ENCODE measurements at regions of chr6 and their contacts with region 1.

Region 1: DNA sequence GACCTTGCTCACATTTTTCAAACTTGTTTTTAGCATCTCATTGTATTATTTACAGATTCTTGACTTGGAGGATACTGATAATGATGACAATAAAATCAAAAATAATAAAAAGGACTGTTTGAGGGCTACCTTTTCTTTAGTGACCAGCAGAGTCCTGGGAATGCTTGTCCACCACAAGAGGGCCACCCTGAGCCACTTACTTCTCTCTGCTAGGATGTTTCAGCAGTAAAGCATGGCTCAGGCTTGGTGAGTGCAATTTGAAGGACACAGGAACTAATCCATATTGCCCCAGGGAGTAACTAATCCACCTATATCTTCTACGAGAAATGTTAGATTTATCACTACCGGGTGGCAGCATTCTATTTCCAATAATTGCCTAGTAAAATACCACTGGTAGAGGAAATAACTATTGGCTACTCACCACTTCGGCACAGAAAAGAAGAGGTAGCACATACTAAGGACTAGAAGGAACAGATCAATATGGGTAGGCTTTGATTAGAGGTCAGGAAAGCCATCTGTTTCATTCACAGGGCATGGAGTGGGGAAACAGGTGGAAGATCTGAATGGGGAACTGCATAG is 5.8 kb upstream of the KIAA0408 start:
- DNase-seq: peak; percentile 39 to 64 (median 45)
- ATAC-seq: peak; percentile 98
- H3K4me3 ChIP-seq: no peak overlapping the region
- H3K27ac ChIP-seq: no peak overlapping the region
- H3K4me1 ChIP-seq: no peaks in the 10 kb centered on the region
- H3K27me3 ChIP-seq: peaks cover 0 to 2% of the 10 kb centered on the region in 2 experiments; a peak in 1 of 5 replicates
- CTCF ChIP-seq: peak; percentile 70 to 81 (median 79)
- EP300 ChIP-seq: no peak
- POLR2A ChIP-seq: no peak
- RAD21 ChIP-seq: peak; percentile 34 to 63

Region 2: GRCh38 chr6:127539272-127539671 is 74.3 kb after region 1 on chr6:
- CTCF ChIA-PET with region 1: interaction called, 4 read pairs
- POLR2A ChIA-PET with region 1: no interaction called
- in situ Hi-C with region 1: no loop called
- intact Hi-C with region 1: loop called (anchors 2 kb)
- DNase-seq: peak in 1 of 4 experiments; percentile 16
- ATAC-seq: 0 out of 3 replicates have a peak, but pooled peaks have one; percentile 47
- H3K4me3 ChIP-seq: no peak overlapping the region
- H3K27ac ChIP-seq: no peak overlapping the region
- H3K4me1 ChIP-seq: no peaks in the 10 kb centered on the region
- H3K27me3 ChIP-seq: no peaks in the 10 kb centered on the region
- CTCF ChIP-seq: peak in 1 of 3 experiments; percentile 43; a peak in 2 of 6 replicates
- EP300 ChIP-seq: no peak
- POLR2A ChIP-seq: no peak
- RAD21 ChIP-seq: peak; percentile 46 to 54

Measured in K562 (cell line).